ENCODE measurements at regions of chr20 and their contacts with region 1.

Region 1: GRCh38 chr20:24160563-24161375 is 172.2 kb upstream of the GGTLC1 start:
- DNase-seq: peak; percentile 79
- H3K4me3 ChIP-seq: no peak overlapping the region
- H3K27ac ChIP-seq: no peak overlapping the region
- H3K4me1 ChIP-seq: no peaks in the 10 kb centered on the region
- H3K27me3 ChIP-seq: no peaks in the 10 kb centered on the region
- CTCF ChIP-seq: peak; percentile 45 to 67 (median 45)
- EP300 ChIP-seq: no peak
- POLR2A ChIP-seq: no peak

Region 2: DNA sequence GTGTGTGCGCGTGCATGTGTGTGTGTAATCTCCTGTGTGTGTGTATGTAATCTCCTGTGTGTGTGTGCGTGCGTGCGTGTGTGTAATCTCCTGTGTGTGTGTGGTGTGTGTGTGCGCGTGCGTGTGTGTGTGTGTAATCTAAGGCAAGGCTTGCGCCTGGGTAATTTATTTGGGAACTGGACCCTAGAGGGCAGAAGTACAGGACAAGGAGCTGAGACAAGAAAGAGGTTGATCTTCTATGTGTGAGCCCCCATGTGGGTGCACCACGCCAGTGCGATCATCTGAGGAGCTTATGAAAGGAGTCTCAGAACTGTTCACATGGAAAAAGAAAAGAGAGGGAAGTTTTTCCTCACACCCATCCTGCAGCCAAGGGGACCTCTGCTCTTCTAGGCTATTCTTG is 47.8 kb after region 1 on chr20:
- intact Hi-C with region 1: no loop called
- DNase-seq: no peak
- H3K4me3 ChIP-seq: no peak overlapping the region
- H3K27ac ChIP-seq: no peak overlapping the region
- H3K4me1 ChIP-seq: no peaks in the 10 kb centered on the region
- H3K27me3 ChIP-seq: peaks cover 0 to 6% (median 0%) of the 10 kb centered on the region in 4 donors
- CTCF ChIP-seq: no peak
- EP300 ChIP-seq: no peak
- POLR2A ChIP-seq: no peak

Region 3: GRCh38 chr20:24545168-24545567 is 384.4 kb after region 1 on chr20:
- intact Hi-C with region 1: no loop called
- DNase-seq: peak; percentile 68
- H3K4me3 ChIP-seq: no peak overlapping the region
- H3K27ac ChIP-seq: no peak overlapping the region
- H3K4me1 ChIP-seq: peaks cover 0 to 2% (median 0%) of the 10 kb centered on the region in 4 donors
- H3K27me3 ChIP-seq: peaks cover 0 to 7% (median 0%) of the 10 kb centered on the region in 4 donors
- CTCF ChIP-seq: no peak
- EP300 ChIP-seq: no peak
- POLR2A ChIP-seq: no peak

Region 4: GRCh38 chr20:24773751-24774201 is 613.0 kb after region 1 on chr20:
- intact Hi-C with region 1: no loop called
- DNase-seq: no peak
- H3K4me3 ChIP-seq: no peak overlapping the region
- H3K27ac ChIP-seq: no peak overlapping the region
- H3K4me1 ChIP-seq: peaks cover 0 to 4% (median 2%) of the 10 kb centered on the region in 4 donors
- H3K27me3 ChIP-seq: peaks cover 0 to 9% (median 0%) of the 10 kb centered on the region in 4 donors
- CTCF ChIP-seq: no peak
- EP300 ChIP-seq: no peak
- POLR2A ChIP-seq: no peak

Region 5: DNA sequence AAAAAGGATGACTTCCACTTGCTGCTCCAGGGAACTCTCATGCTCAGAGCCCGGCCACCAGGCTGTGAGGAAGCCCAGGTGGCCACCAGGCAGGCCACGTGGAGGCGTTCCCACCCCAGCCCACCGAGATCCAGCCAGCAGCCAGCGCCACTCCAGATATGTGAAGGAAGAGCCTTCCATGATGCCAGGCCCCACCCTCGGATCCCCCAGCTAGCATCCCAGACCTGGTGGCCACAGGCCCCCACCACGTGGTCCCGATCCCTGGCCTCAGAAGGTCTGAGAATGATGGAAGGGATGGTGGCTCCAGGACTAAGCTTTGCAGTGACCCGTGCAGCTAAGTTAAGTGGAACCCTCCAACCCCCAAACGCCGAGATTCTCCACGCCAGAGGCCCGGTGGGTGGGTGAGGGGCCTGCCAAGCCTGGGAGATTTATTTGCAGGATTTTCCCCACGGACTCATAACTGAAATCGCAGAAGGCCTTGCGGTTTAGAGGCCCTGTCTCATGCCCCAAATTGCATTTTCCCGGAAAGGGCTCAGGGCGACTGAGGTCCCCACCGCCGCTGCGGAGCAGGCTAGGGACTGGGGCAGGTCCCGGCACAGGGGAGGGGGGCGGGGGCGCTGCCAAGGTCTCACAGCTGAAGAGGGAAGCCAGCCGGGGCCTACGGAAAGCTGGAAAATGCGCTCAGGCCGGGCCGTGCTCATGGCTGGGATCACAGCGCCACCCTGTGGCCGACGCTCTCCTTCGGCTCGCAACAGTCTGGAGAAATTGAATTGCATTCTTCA is 757.2 kb after region 1 on chr20:
- intact Hi-C with region 1: loop called (anchors 5 kb)
- DNase-seq: no peak
- H3K4me3 ChIP-seq: peak overlapping the region in 2 of 4 donors; percentile 14 to 37
- H3K27ac ChIP-seq: no peak overlapping the region
- H3K4me1 ChIP-seq: peaks cover 0 to 10% (median 9%) of the 10 kb centered on the region in 4 donors
- H3K27me3 ChIP-seq: peaks cover 0 to 6% (median 0%) of the 10 kb centered on the region in 4 donors
- CTCF ChIP-seq: peak; percentile 62 to 77 (median 64)
- EP300 ChIP-seq: no peak
- POLR2A ChIP-seq: no peak